ENCODE measurements at regions of chr1 and their contacts with region 1.

Region 1: DNA sequence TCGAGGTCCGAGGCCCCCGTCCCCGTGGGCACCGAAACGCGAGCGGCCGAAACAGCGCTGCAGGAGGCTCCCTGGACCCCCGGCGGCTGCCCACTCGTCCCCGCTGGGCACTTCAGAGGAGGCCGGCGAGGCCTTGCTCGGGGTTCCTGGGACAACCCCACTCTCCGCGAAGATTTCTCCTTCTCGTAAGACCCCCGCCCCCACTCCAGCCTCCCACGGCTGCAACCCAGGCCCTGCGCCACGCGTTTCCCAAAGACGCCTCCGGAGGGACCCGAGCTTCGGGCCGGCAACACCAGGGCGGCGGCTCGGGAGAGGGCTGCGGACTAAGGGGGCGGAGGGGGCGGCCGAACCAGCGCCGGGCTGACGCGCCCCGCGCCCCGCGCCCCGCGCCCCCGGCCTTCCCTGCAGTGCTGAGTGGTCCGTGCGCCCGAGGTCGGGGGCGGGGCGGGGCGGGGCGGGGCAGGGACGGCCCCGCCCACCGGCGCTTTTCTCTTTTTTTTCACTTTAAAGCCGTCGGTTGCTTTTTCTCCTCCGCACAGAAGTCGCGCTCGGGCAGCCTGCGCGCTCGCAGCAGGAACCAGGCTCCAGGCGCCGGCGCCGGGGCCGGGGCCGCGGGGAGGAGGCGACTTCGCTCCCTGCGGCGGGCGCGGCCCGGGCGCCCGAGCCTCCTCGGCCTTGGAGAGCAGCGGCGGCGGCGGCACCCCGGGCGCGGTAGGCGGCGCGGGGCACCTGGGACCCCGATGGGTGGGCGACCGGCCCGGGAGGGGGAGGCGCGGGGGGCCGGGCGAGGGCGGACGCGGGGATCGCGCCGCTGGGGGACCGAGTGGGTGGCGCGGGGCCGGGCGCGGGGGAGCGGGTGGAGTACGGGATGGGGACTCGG is at the start of gene SPSB1:
- DNase-seq: peak; percentile 79
- H3K4me3 ChIP-seq: peak within 1 kb of the TSS; percentile 38 to 67 (median 64)
- H3K27ac ChIP-seq: peak within 1 kb of the TSS; percentile 54
- H3K4me1 ChIP-seq: peaks cover 15% of the 10 kb centered on the region
- H3K27me3 ChIP-seq: no peaks in the 10 kb centered on the region
- CTCF ChIP-seq: no peak
- POLR2A ChIP-seq: peak; percentile 92
- total RNA-seq, gene SPSB1: 41.9 and 50.9 TPM in 2 replicates

Region 2: GRCh38 chr1:9069326-9070100 is 223.1 kb before region 1 on chr1 and contains the start of gene SLC2A5:
- CTCF ChIA-PET with region 1: no interaction called
- POLR2A ChIA-PET with region 1: no interaction called
- dilution Hi-C with region 1: no loop called
- intact Hi-C with region 1: no loop called
- DNase-seq: no peak
- H3K4me3 ChIP-seq: no peak within 1 kb of the TSS
- H3K27ac ChIP-seq: no peak within 1 kb of the TSS
- H3K4me1 ChIP-seq: peaks cover 3% of the 10 kb centered on the region
- H3K27me3 ChIP-seq: no peaks in the 10 kb centered on the region
- CTCF ChIP-seq: no peak
- POLR2A ChIP-seq: no peak
- total RNA-seq, gene SLC2A5: not detected in 2 replicates

Region 3: DNA sequence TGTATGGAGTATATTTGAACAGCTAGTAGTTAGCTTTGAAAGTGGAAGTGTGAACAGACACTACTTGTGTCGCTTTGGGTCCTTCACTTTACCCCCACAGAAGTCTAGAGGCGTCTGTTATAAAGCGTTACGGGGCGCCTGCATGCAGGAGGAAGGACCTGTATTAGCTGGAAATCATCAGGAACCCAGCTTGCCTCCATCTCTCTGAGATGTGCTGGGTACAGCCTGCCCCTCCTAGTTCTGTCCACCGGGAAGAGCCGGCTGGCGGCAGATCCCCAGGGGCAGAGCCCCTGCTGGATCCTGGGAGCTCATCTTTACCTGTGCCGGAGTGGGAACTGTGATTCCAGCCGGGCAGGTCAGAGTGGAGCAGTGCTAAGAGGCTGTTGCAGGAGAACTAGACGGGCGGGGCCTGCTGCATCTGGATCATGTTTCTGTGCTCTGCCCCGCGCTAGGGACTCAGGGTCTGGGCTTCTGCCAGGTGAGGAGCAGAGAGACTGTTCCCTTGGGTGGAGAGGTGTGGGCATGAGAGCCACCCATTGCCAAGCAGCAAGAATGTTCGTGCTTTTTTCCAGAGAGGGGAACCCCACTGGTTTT is 22.2 kb before region 1 on chr1:
- CTCF ChIA-PET with region 1: interaction called, 87 read pairs
- POLR2A ChIA-PET with region 1: no interaction called
- dilution Hi-C with region 1: no loop called
- intact Hi-C with region 1: loop called (anchors 1 kb)
- DNase-seq: no peak
- H3K4me3 ChIP-seq: no peak overlapping the region
- H3K27ac ChIP-seq: no peak overlapping the region
- H3K4me1 ChIP-seq: peaks cover 4% of the 10 kb centered on the region
- H3K27me3 ChIP-seq: no peaks in the 10 kb centered on the region
- CTCF ChIP-seq: no peak
- POLR2A ChIP-seq: no peak

Region 4: GRCh38 chr1:9317591-9318417 is 25.2 kb after region 1 on chr1:
- CTCF ChIA-PET with region 1: interaction called, 5 read pairs
- POLR2A ChIA-PET with region 1: interaction called, 3 read pairs
- dilution Hi-C with region 1: no loop called
- intact Hi-C with region 1: loop called (anchors 1 kb)
- DNase-seq: peak; percentile 83
- H3K4me3 ChIP-seq: no peak overlapping the region
- H3K27ac ChIP-seq: peak overlapping the region; percentile 79
- H3K4me1 ChIP-seq: peaks cover 18% of the 10 kb centered on the region
- H3K27me3 ChIP-seq: no peaks in the 10 kb centered on the region
- CTCF ChIP-seq: no peak
- POLR2A ChIP-seq: no peak

Region 5: GRCh38 chr1:9376886-9377333 is 84.3 kb after region 1 on chr1:
- CTCF ChIA-PET with region 1: interaction called, 9 read pairs
- POLR2A ChIA-PET with region 1: no interaction called
- dilution Hi-C with region 1: no loop called
- intact Hi-C with region 1: loop called (anchors 1 kb)
- DNase-seq: peak; percentile 68
- H3K4me3 ChIP-seq: no peak overlapping the region
- H3K27ac ChIP-seq: peak overlapping the region; percentile 59
- H3K4me1 ChIP-seq: peaks cover 30% of the 10 kb centered on the region
- H3K27me3 ChIP-seq: no peaks in the 10 kb centered on the region
- CTCF ChIP-seq: no peak
- POLR2A ChIP-seq: no peak

Region 6: GRCh38 chr1:9449106-9449627 is 156.6 kb after region 1 on chr1:
- CTCF ChIA-PET with region 1: interaction called, 157 read pairs
- POLR2A ChIA-PET with region 1: no interaction called
- dilution Hi-C with region 1: no loop called
- intact Hi-C with region 1: loop called (anchors 5 kb)
- DNase-seq: peak; percentile 31
- H3K4me3 ChIP-seq: no peak overlapping the region
- H3K27ac ChIP-seq: no peak overlapping the region
- H3K4me1 ChIP-seq: peaks cover 4% of the 10 kb centered on the region
- H3K27me3 ChIP-seq: no peaks in the 10 kb centered on the region
- CTCF ChIP-seq: no peak
- POLR2A ChIP-seq: no peak

Region 7: DNA sequence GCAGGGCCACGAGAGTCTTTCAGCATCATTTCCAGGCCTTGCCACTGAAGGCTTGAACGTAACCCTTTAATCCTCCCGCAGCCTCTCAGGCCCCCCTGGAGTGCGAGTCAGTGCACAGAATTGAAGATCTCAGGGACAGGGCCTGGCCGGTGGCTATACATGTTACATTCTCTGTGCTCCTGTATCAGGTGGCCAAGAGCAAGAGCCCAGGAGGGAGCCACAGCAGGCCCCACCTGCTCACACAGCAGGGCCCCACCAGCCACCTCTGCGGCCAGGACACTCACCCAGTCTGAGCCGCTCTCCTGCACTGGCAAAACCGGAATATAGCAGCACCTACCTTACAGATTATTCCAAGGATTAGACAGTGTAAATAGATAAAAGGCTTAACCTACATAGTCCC is 212.6 kb after region 1 on chr1:
- CTCF ChIA-PET with region 1: no interaction called
- POLR2A ChIA-PET with region 1: no interaction called
- dilution Hi-C with region 1: no loop called
- intact Hi-C with region 1: no loop called
- DNase-seq: no peak
- H3K4me3 ChIP-seq: no peak overlapping the region
- H3K27ac ChIP-seq: no peak overlapping the region
- H3K4me1 ChIP-seq: no peaks in the 10 kb centered on the region
- H3K27me3 ChIP-seq: peaks cover 0 to 2% of the 10 kb centered on the region in 2 experiments
- CTCF ChIP-seq: no peak
- POLR2A ChIP-seq: no peak

Region 8: GRCh38 chr1:9573723-9574122 is 281.1 kb after region 1 on chr1:
- CTCF ChIA-PET with region 1: interaction called, 5 read pairs
- POLR2A ChIA-PET with region 1: no interaction called
- dilution Hi-C with region 1: no loop called
- intact Hi-C with region 1: loop called (anchors 2 kb)
- DNase-seq: no peak
- H3K4me3 ChIP-seq: no peak overlapping the region
- H3K27ac ChIP-seq: no peak overlapping the region
- H3K4me1 ChIP-seq: no peaks in the 10 kb centered on the region
- H3K27me3 ChIP-seq: no peaks in the 10 kb centered on the region
- CTCF ChIP-seq: peak; percentile 15 to 22
- POLR2A ChIP-seq: no peak

Measured in endothelial cell of umbilical vein (primary cell).